Naive thymus-derived CD4-positive, alpha-beta T cell (primary cell): ENCODE measurements at regions of chr1 and their contacts with region 1.

Region 1: GRCh38 chr1:53393325-53393792 is 65.5 kb upstream of the LRP8 start:
- DNase-seq: peak; percentile 28 to 80 (median 62)
- ATAC-seq: peak; percentile 81
- H3K4me3 ChIP-seq: no peak overlapping the region
- H3K4me3 Mint-ChIP-seq: no peak overlapping the region
- H3K27ac ChIP-seq: no peak overlapping the region
- H3K27ac Mint-ChIP-seq: peak overlapping the region in 1 of 9 donors; percentile 45
- H3K4me1 ChIP-seq: no peaks in the 10 kb centered on the region
- H3K4me1 Mint-ChIP-seq: peaks cover 0 to 10% (median 0%) of the 10 kb centered on the region in 7 donors
- H3K27me3 ChIP-seq: no peaks in the 10 kb centered on the region
- H3K27me3 Mint-ChIP-seq: peaks cover 0 to 10% (median 0%) of the 10 kb centered on the region in 5 donors

Region 2: GRCh38 chr1:53552146-53552940 is 159.0 kb after region 1 on chr1:
- CTCF ChIA-PET with region 1: no interaction called
- POLR2A ChIA-PET with region 1: no interaction called
- intact Hi-C with region 1: no loop called
- DNase-seq: no peak
- ATAC-seq: no peak
- H3K4me3 ChIP-seq: no peak overlapping the region
- H3K4me3 Mint-ChIP-seq: no peak overlapping the region
- H3K27ac ChIP-seq: no peak overlapping the region
- H3K27ac Mint-ChIP-seq: no peak overlapping the region
- H3K4me1 ChIP-seq: no peaks in the 10 kb centered on the region
- H3K4me1 Mint-ChIP-seq: peaks cover 0 to 1% (median 0%) of the 10 kb centered on the region in 7 donors
- H3K27me3 ChIP-seq: no peaks in the 10 kb centered on the region
- H3K27me3 Mint-ChIP-seq: peaks cover 0 to 10% (median 5%) of the 10 kb centered on the region in 5 donors

Region 3: DNA sequence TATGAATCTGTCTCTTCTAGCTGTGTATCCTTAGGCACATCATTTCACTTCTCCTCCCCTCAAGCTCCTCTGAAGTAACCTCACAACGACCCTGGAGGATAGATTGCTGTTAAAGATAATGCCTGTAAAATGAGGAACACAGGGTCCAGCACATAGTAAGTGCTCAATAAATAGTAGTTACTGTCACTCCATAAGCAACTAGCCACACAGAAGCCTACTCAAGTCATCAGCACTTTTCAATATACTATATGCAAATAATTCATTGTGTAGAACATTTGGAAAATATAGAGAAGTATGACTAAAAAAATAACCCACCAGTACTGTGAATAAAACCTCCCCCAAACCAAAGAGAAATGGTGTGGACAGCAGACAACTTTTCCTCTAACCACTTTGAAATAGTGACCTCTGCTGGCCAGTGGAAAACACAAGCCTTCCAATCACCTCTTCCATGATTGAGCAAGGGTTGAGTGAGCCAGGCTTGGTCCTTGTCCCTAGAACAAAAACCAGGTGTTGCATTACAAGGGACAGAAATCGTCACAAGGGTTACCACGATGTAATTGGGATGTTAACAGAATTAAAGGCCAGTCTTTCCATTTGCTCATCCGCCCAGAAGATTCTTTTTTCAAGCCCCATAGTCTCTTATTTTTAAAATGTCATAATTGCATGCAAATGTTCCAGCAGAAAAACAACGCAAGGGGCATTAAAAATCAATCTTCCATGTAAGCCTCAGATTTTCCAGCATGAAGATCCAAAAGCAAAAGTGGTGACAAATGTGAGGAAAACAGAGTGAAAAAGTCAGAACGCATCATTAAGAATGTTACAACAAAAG is 361.3 kb after region 1 on chr1:
- CTCF ChIA-PET with region 1: no interaction called
- POLR2A ChIA-PET with region 1: no interaction called
- intact Hi-C with region 1: loop called in 1 of 2 experiments (anchors 1 kb)
- DNase-seq: peak in 2 of 9 donors; percentile 2 to 7
- ATAC-seq: no peak
- H3K4me3 ChIP-seq: no peak overlapping the region
- H3K4me3 Mint-ChIP-seq: no peak overlapping the region
- H3K27ac ChIP-seq: no peak overlapping the region
- H3K27ac Mint-ChIP-seq: no peak overlapping the region
- H3K4me1 ChIP-seq: no peaks in the 10 kb centered on the region
- H3K4me1 Mint-ChIP-seq: no peaks in the 10 kb centered on the region
- H3K27me3 ChIP-seq: no peaks in the 10 kb centered on the region
- H3K27me3 Mint-ChIP-seq: peaks cover 0 to 1% (median 0%) of the 10 kb centered on the region in 5 donors